ENCODE measurements at regions of chr5 and their contacts with region 1.

Region 1: GRCh38 chr5:91383027-91383955 is at the start of gene ARRDC3:
- DNase-seq: peak; percentile 97
- H3K4me3 ChIP-seq: peak within 1 kb of the TSS; percentile 74 to 83 (median 77)
- H3K27ac ChIP-seq: peak within 1 kb of the TSS; percentile 94 to 100 (median 100)
- H3K4me1 ChIP-seq: peaks cover 2 to 4% of the 10 kb centered on the region in 2 donors
- H3K27me3 ChIP-seq: no peaks in the 10 kb centered on the region
- CTCF ChIP-seq: no peak
- POLR2A ChIP-seq: peak; percentile 96 to 99
- total RNA-seq, gene ARRDC3: 168 to 289 (median 228) TPM

Region 2: DNA sequence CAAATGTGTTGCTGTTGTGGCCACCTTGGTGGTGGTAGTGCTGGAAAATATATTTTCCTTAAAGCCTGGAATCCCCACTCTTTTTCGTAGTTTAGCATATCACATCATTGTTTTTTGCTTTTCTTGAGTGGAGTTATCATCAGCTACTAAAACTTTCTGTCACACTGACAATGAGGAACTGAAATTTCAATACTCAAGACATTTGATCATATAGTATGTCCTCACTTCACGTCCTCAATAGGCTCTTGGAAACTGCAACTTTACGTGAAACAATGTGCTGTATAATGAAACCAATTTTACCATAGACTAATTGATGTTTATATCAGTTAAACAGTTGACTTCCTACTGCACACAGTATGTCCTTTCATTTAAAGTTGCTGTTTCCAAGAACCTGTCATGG is 558.9 kb before region 1 on chr5:
- intact Hi-C with region 1: no loop called
- DNase-seq: no peak
- H3K4me3 ChIP-seq: no peak overlapping the region
- H3K27ac ChIP-seq: no peak overlapping the region
- H3K4me1 ChIP-seq: no peaks in the 10 kb centered on the region
- H3K27me3 ChIP-seq: no peaks in the 10 kb centered on the region
- CTCF ChIP-seq: no peak
- POLR2A ChIP-seq: no peak

Region 3: DNA sequence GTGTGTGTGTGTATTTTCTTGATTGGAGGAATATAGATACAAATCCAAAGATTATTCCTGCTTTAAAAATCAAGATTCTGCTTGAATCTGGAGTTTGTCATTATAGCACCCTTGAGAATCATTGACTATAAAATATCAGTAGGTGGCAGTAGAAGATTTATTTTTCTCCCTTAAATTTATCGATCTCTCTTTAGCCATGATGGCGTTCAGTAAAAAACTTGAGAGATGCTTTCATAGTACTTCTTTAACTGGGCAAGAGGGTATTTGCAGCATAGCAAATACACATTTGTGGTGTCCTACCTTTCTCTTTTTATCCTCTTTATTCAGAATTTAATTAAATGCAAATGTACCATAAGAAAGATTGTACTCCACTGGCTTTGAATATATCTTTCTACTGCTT is 517.0 kb before region 1 on chr5:
- intact Hi-C with region 1: loop called (anchors 10 kb)
- DNase-seq: no peak
- H3K4me3 ChIP-seq: no peak overlapping the region
- H3K27ac ChIP-seq: no peak overlapping the region
- H3K4me1 ChIP-seq: peaks cover 0 to 16% of the 10 kb centered on the region in 2 donors
- H3K27me3 ChIP-seq: no peaks in the 10 kb centered on the region
- CTCF ChIP-seq: peak in 4 of 6 experiments; percentile 33 to 79 (median 56)
- POLR2A ChIP-seq: no peak

Region 4: GRCh38 chr5:91101600-91102379 is 281.5 kb before region 1 on chr5:
- intact Hi-C with region 1: loop called (anchors 5 kb)
- DNase-seq: peak; percentile 72 to 79
- H3K4me3 ChIP-seq: no peak overlapping the region
- H3K27ac ChIP-seq: peak overlapping the region; percentile 0 to 48 (median 11)
- H3K4me1 ChIP-seq: peaks cover 9 to 12% of the 10 kb centered on the region in 2 donors
- H3K27me3 ChIP-seq: no peaks in the 10 kb centered on the region
- CTCF ChIP-seq: peak; percentile 40 to 96 (median 79)
- POLR2A ChIP-seq: no peak

Region 5: GRCh38 chr5:91225848-91226686 is 157.2 kb before region 1 on chr5:
- intact Hi-C with region 1: loop called (anchors 5 kb)
- DNase-seq: peak; percentile 74 to 75
- H3K4me3 ChIP-seq: no peak overlapping the region
- H3K27ac ChIP-seq: peak overlapping the region; percentile 16 to 76 (median 40)
- H3K4me1 ChIP-seq: peaks cover 27 to 28% of the 10 kb centered on the region in 2 donors
- H3K27me3 ChIP-seq: no peaks in the 10 kb centered on the region
- CTCF ChIP-seq: peak in 4 of 6 experiments; percentile 33 to 74 (median 66)
- POLR2A ChIP-seq: no peak

Region 6: GRCh38 chr5:91474201-91474600 is 90.9 kb after region 1 on chr5:
- intact Hi-C with region 1: no loop called
- DNase-seq: no peak
- H3K4me3 ChIP-seq: no peak overlapping the region
- H3K27ac ChIP-seq: no peak overlapping the region
- H3K4me1 ChIP-seq: no peaks in the 10 kb centered on the region
- H3K27me3 ChIP-seq: no peaks in the 10 kb centered on the region
- CTCF ChIP-seq: no peak
- POLR2A ChIP-seq: no peak

Region 7: GRCh38 chr5:91712718-91713117 is 329.4 kb after region 1 on chr5:
- intact Hi-C with region 1: no loop called
- DNase-seq: no peak
- H3K4me3 ChIP-seq: no peak overlapping the region
- H3K27ac ChIP-seq: no peak overlapping the region
- H3K4me1 ChIP-seq: no peaks in the 10 kb centered on the region
- H3K27me3 ChIP-seq: no peaks in the 10 kb centered on the region
- CTCF ChIP-seq: no peak
- POLR2A ChIP-seq: no peak